Posterior vena cava (tissue), 2 donors: ENCODE measurements at regions of chr12 and their contacts with region 1.

Region 1: DNA sequence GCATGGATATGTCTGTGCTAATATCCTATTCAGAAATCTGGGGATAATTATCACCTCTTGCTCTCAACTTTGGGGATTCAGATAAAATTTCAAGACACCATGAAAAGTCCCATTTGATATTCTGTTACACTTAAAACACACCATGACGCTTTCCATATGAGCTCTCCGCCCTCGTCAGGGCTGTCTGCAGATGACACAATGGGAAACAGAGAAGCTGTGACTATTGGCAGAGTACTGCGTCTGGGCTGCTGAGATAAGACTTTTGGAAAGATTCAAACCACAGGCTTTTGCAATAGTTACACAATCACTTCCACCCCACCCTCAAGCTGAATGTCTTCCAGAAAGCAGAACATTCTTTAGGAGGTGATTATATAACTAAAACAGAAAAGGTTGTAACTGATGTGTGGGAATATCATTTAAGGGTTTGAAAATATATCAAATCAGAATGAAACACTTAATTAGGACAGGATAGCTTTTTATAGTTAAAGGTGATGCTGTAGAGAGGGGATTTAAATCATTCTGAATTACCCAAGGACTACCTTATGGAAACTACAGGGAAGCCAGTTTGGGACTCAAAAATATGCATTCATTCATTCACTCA is 75.3 kb upstream of the TMPO start:
- DNase-seq: peak; percentile 87

Region 2: DNA sequence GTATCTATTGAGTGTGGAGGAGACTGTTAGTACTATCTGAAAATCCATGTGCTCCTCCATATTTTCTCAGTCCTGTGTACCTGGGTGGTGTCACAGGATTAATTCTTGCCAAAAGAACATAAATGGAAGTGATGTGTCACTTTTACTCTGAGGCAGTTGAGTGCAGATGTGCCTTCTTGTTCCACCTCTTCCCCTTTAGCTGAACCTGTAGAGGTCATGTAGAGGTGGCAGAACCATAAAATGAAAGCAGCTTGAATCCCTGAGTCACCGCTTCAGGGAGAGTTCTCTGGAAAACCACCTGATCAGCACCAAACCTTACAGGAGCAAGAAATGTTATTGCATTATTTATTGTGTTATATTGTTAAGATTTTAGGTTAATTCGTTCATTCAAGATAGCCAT is 138.7 kb after region 1 on chr12:
- intact Hi-C with region 1: no loop called
- DNase-seq: no peak

Region 3: DNA sequence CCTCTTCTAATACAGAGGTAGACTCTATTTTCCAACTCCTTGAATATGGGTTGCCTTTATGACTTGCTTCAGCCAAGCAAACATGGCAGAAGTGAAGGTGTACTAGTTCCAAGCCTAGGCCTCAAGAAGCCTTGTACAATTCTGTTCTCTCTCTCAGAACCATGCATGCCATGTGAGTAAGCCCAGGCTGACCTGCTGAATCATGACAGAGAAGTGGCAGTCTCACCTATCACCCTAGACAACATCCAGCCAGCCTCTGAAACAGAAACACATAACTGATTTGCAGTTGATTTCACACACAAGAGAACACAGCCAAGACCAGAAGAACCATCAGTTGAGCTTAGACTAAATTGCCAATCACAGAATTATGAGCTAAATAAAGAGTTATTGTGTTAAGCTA is 1364.6 kb after region 1 on chr12:
- intact Hi-C with region 1: loop called in 1 of 2 experiments (anchors 5 kb)
- DNase-seq: no peak